Activated B cell treated with CpG ODN at 0.5 μM for 24 hours (primary cell): ENCODE measurements at regions of chr3 and their contacts with region 1.

Region 1: GRCh38 chr3:136929984-136930670 is 27.7 kb upstream of the IL20RB start:
- DNase-seq: no peak
- ATAC-seq: no peak
- H3K4me3 Mint-ChIP-seq: no peak overlapping the region
- H3K27ac Mint-ChIP-seq: no peak overlapping the region
- H3K4me1 Mint-ChIP-seq: peaks cover 55% of the 10 kb centered on the region
- H3K27me3 Mint-ChIP-seq: no peaks in the 10 kb centered on the region
- CTCF ChIP-seq: no peak

Region 2: DNA sequence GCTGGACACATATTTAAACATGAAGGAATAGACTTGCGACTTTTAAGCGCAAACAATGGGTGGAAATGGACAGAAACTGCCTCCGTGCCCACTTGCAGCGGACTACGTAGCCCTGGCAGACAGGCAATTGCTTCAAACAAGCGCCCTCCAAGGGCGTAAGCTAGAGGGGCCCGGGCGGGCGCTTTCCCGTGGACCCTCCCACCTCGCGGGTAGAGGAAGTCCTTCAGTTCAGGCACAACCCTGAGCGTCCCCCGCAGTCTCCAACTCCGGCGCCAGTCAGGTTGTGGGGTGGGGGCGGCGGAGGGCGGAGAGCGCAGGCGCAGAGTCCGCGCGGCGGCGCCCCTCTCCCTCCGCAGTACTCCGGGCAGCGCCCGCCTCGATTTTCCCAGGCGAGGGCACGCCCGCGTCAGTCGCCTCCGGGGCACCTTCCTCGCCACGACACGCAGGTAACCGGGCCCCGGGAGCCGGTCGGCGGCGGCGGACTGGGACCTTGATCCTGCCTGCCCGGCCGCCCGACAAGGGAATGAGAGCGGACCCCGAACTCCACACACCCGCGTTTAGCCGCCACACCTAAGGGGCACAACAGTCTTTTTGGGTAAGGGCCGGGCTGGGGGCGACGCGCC is 111.2 kb before region 1 on chr3 and contains the start of gene SLC35G2:
- CTCF ChIA-PET with region 1: no interaction called
- POLR2A ChIA-PET with region 1: no interaction called
- intact Hi-C with region 1: loop called (anchors 5 kb)
- DNase-seq: peak; percentile 42
- ATAC-seq: peak; percentile 67
- H3K4me3 Mint-ChIP-seq: peak within 1 kb of the TSS; percentile 89
- H3K27ac Mint-ChIP-seq: peak within 1 kb of the TSS; percentile 87
- H3K4me1 Mint-ChIP-seq: peaks cover 22% of the 10 kb centered on the region
- H3K27me3 Mint-ChIP-seq: peaks cover 21% of the 10 kb centered on the region
- CTCF ChIP-seq: no peak
- total RNA-seq, gene SLC35G2: 4.2 and 4.3 TPM in 2 replicates

Region 3: GRCh38 chr3:136916223-136916622 is 13.9 kb before region 1 on chr3:
- CTCF ChIA-PET with region 1: no interaction called
- POLR2A ChIA-PET with region 1: no interaction called
- intact Hi-C with region 1: loop called (anchors 2 kb)
- DNase-seq: no peak
- ATAC-seq: no peak
- H3K4me3 Mint-ChIP-seq: no peak overlapping the region
- H3K27ac Mint-ChIP-seq: no peak overlapping the region
- H3K4me1 Mint-ChIP-seq: peaks cover 67% of the 10 kb centered on the region
- H3K27me3 Mint-ChIP-seq: no peaks in the 10 kb centered on the region
- CTCF ChIP-seq: no peak

Region 4: DNA sequence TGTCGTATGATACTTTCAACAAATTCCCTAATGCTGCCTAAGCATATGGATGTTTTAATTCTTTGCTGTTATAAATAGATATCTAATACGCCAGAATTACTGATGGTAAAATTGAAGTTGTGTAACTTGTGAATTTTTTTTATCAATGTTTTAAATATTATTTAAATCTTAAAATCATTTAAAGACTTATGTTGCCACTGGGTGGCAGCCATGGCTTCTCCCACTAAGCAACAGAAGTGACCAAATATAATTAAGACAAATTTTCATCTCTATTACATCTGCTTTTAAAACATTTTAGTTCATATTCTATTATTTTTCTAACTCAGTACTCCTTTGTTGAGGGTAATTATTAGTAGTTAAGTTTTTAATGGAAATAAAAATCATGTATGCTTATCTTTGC is 19.6 kb after region 1 on chr3:
- CTCF ChIA-PET with region 1: no interaction called
- POLR2A ChIA-PET with region 1: no interaction called
- intact Hi-C with region 1: loop called (anchors 2 kb)
- DNase-seq: no peak
- ATAC-seq: no peak
- H3K4me3 Mint-ChIP-seq: no peak overlapping the region
- H3K27ac Mint-ChIP-seq: no peak overlapping the region
- H3K4me1 Mint-ChIP-seq: peaks cover 41% of the 10 kb centered on the region
- H3K27me3 Mint-ChIP-seq: no peaks in the 10 kb centered on the region
- CTCF ChIP-seq: no peak